WTC11 (cell line): ENCODE measurements at regions of chr17 and their contacts with region 1.

Region 1: DNA sequence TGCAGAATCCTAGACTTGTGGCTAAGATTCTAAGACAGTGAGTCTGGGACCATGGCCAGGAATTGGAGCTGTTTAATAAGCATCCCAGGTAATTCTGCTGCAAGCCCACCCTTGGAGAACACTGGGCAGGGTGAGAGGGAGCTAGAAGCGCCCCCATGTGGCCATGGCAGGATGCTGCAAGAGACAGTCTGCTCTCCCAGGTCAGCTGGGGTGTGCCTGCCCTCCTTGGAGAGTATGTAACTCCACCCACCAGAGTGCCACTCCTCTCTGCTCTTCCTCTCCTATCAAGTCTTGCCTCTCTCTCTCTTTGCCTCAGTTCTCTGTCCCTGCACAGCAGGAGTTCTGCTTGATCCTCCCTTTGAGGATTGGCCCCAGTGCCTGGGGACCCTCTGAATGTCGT is 14.9 kb downstream of the RCVRN start:
- DNase-seq: peak; percentile 79
- ATAC-seq: peak; percentile 100
- H3K4me3 Mint-ChIP-seq: no peak overlapping the region
- H3K27ac Mint-ChIP-seq: no peak overlapping the region
- H3K4me1 Mint-ChIP-seq: 0 out of 2 replicates have a peak, but pooled peaks cover 3% of the 10 kb centered on the region
- H3K27me3 Mint-ChIP-seq: no peaks in the 10 kb centered on the region; the same call in 1 of the 2 replicates
- CTCF ChIP-seq: peak; percentile 93

Region 2: DNA sequence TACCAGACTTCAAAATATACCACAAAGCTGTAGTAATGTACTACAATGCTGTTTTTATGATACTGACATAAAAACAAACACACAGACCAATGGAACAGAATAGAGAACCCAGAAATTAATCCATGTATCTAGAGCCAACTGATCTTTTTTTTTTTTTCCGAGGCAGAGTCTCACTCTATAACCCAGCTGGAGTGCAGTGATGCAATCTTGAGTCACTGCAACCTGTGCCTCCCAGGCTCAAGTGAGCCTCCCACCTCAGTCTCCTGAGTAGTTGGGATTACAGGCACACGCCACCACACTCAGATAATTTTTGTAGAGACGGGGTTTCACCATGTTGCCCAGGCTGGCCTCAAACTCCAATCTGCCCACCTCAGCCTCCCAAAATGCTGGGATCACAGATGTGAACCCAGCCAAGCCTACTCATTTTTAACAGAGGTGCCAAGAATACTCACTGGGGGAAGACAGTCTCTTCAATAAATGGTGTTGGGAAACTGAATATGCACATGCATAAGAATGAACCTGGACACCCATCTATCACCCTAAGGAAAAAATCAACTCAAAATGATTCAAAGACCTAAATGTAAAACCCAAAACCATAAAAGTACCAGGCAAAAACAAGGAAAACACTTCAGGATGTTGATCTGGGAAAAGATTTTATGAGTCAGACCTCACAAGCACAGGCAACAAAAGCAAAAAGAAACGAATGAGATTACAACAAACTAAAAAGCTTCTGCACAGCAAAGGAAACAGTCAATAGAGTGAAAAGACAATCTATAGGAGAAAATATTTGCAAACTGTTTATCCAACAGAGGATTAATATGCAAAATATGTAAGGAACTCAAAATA is 377.6 kb before region 1 on chr17:
- CTCF ChIA-PET with region 1: no interaction called
- POLR2A ChIA-PET with region 1: no interaction called
- DNase-seq: no peak
- ATAC-seq: no peak; the same call in 1 of the 2 replicates
- H3K4me3 Mint-ChIP-seq: no peak overlapping the region
- H3K27ac Mint-ChIP-seq: peak overlapping the region; percentile 52
- H3K4me1 Mint-ChIP-seq: peaks cover 12% of the 10 kb centered on the region
- H3K27me3 Mint-ChIP-seq: no peaks in the 10 kb centered on the region; the same call in 1 of the 2 replicates
- CTCF ChIP-seq: no peak

Region 3: GRCh38 chr17:9729034-9729650 is 161.0 kb before region 1 on chr17:
- CTCF ChIA-PET with region 1: interaction called, 10 read pairs
- POLR2A ChIA-PET with region 1: no interaction called
- DNase-seq: no peak
- ATAC-seq: peak; percentile 32; the same call in 1 of the 2 replicates
- H3K4me3 Mint-ChIP-seq: no peak overlapping the region
- H3K27ac Mint-ChIP-seq: no peak overlapping the region
- H3K4me1 Mint-ChIP-seq: no peaks in the 10 kb centered on the region
- H3K27me3 Mint-ChIP-seq: peaks cover 5% of the 10 kb centered on the region; the same call in 1 of the 2 replicates
- CTCF ChIP-seq: peak; percentile 96

Region 4: DNA sequence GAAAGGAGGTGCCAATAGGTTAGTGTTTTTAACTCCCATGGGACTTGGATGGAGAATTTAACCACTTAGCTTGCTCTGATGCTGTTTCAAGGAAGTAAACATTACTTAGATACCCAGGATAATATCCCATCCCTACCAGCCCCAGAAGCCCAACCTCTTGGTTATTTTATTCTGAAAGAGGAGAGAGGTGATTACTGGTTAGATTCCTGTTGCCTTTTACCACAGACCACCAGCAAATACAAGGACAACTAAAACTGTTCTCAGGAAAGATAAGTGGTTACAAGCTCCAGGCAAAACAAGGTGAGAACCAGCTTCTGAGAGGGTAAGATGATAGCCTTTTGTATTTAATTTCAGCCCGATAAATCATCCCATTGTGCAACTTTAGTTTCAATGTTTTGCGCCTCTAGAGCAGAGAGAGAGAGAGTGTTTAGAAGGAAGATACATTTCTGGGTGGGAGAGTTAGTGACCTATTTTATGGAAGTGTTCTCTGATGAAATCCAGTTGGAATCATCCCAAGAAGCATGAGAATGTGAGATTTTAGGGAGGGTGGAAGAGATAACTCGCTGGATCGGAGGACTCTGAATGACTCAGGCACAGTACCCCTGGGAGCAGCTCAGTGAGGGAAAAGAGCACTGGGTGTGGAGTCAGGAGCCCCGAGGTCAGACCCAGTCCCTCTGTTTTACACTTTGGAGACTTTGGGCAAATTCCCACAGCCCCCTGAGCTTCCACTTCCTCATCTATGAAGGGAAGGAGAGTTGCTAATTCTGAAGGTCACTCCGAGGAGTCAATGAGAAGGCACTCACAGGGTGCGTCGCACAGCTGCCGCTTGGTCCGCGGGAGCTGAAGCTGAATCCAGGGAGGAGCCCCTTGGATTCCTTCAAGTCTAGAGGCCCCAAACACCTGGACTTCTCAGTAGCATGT is 52.3 kb before region 1 on chr17:
- CTCF ChIA-PET with region 1: interaction called, 18 read pairs
- POLR2A ChIA-PET with region 1: no interaction called
- DNase-seq: no peak
- ATAC-seq: peak; percentile 22; the same call in 1 of the 2 replicates
- H3K4me3 Mint-ChIP-seq: no peak overlapping the region
- H3K27ac Mint-ChIP-seq: no peak overlapping the region
- H3K4me1 Mint-ChIP-seq: peaks cover 21% of the 10 kb centered on the region
- H3K27me3 Mint-ChIP-seq: peaks cover 14% of the 10 kb centered on the region
- CTCF ChIP-seq: no peak

Region 5: DNA sequence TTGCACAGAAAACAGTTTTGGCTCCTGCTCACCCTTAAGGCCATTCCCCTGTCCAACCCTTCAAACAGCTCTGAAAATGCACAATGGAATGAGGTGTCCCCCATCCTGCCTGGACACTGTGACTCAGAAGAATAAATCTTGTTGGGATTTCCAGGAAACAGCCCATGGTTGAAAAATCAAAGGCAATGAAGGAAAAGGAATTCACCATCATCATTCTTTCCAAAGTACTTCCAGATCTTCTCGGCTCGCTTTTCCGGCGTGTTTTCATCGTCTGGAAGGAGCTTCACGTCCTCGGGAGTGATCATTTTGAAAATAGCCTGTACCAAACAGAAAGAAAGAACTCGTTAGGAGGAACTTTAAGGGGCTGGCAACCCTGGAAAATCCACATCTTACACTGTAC is 10.7 kb after region 1 on chr17:
- CTCF ChIA-PET with region 1: interaction called, 39 read pairs
- POLR2A ChIA-PET with region 1: no interaction called
- DNase-seq: no peak
- ATAC-seq: no peak
- H3K4me3 Mint-ChIP-seq: no peak overlapping the region
- H3K27ac Mint-ChIP-seq: no peak overlapping the region
- H3K4me1 Mint-ChIP-seq: peaks cover 4% of the 10 kb centered on the region; the same call in 1 of the 2 replicates
- H3K27me3 Mint-ChIP-seq: peaks cover 3% of the 10 kb centered on the region; the same call in 1 of the 2 replicates
- CTCF ChIP-seq: no peak

Region 6: GRCh38 chr17:9924735-9925191 is 34.6 kb after region 1 on chr17:
- CTCF ChIA-PET with region 1: interaction called, 16 read pairs
- POLR2A ChIA-PET with region 1: no interaction called
- DNase-seq: no peak
- ATAC-seq: peak; percentile 82
- H3K4me3 Mint-ChIP-seq: no peak overlapping the region
- H3K27ac Mint-ChIP-seq: no peak overlapping the region
- H3K4me1 Mint-ChIP-seq: 0 out of 2 replicates have a peak, but pooled peaks cover 4% of the 10 kb centered on the region
- H3K27me3 Mint-ChIP-seq: no peaks in the 10 kb centered on the region
- CTCF ChIP-seq: peak; percentile 67

Region 7: DNA sequence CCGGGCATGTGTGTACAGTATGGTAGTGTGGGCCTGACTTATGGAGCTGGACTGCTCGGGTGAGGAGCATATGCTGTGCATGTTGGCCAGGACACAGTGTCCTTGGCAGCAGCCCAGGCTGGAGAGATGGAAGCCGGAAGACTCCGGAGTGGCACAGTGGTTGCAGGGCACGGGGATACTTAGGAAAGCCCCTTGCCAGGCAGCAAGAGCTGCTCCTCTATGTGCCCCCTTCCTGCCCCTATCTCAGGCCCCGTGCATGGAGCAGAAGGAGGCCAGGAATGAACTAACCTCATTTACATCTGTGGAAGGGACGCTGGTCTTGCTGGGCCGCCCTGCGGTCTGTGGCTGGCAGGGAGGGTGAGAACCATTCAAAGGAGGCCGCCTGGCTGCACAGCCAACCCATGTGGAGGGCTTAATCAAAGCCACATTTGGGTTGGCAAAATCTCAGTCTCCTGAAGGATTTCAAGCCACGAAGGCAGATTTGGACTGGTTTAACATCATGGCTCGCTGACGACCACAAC is 47.2 kb after region 1 on chr17:
- CTCF ChIA-PET with region 1: no interaction called
- POLR2A ChIA-PET with region 1: no interaction called
- DNase-seq: no peak
- ATAC-seq: no peak
- H3K4me3 Mint-ChIP-seq: no peak overlapping the region
- H3K27ac Mint-ChIP-seq: no peak overlapping the region
- H3K4me1 Mint-ChIP-seq: no peaks in the 10 kb centered on the region
- H3K27me3 Mint-ChIP-seq: no peaks in the 10 kb centered on the region
- CTCF ChIP-seq: no peak

Region 8: GRCh38 chr17:10081571-10082169 is 191.5 kb after region 1 on chr17:
- CTCF ChIA-PET with region 1: no interaction called
- POLR2A ChIA-PET with region 1: no interaction called
- DNase-seq: no peak
- ATAC-seq: no peak
- H3K4me3 Mint-ChIP-seq: no peak overlapping the region
- H3K27ac Mint-ChIP-seq: peak overlapping the region; percentile 71
- H3K4me1 Mint-ChIP-seq: peaks cover 22% of the 10 kb centered on the region
- H3K27me3 Mint-ChIP-seq: no peaks in the 10 kb centered on the region
- CTCF ChIP-seq: no peak